Activated CD4-positive, alpha-beta T cell treated with anti-CD3 and anti-CD28 coated beads for 36 hours (primary cell): ENCODE measurements at regions of chr2 and their contacts with region 1.

Region 1: GRCh38 chr2:28681158-28681571 is 70.5 kb upstream of the PPP1CB start:
- DNase-seq: peak; percentile 81
- ATAC-seq: peak; percentile 91
- H3K4me3 Mint-ChIP-seq: peak overlapping the region; percentile 20
- H3K27ac Mint-ChIP-seq: peak overlapping the region; percentile 91
- H3K4me1 Mint-ChIP-seq: peaks cover 41% of the 10 kb centered on the region
- H3K27me3 Mint-ChIP-seq: no peaks in the 10 kb centered on the region

Region 2: GRCh38 chr2:28377984-28378678 is 303.0 kb before region 1 on chr2:
- CTCF ChIA-PET with region 1: no interaction called
- POLR2A ChIA-PET with region 1: no interaction called
- intact Hi-C with region 1: no loop called
- DNase-seq: peak; percentile 35
- ATAC-seq: peak; percentile 27
- H3K4me3 Mint-ChIP-seq: no peak overlapping the region
- H3K27ac Mint-ChIP-seq: no peak overlapping the region
- H3K4me1 Mint-ChIP-seq: peaks cover 20% of the 10 kb centered on the region
- H3K27me3 Mint-ChIP-seq: no peaks in the 10 kb centered on the region

Region 3: GRCh38 chr2:28649481-28650214 is 31.5 kb before region 1 on chr2:
- CTCF ChIA-PET with region 1: interaction called, 3 read pairs
- POLR2A ChIA-PET with region 1: interaction called, 3 read pairs
- intact Hi-C with region 1: loop called in 1 of 2 experiments (anchors 2 kb)
- DNase-seq: peak; percentile 79
- ATAC-seq: peak; percentile 97
- H3K4me3 Mint-ChIP-seq: peak overlapping the region; percentile 8
- H3K27ac Mint-ChIP-seq: peak overlapping the region; percentile 83
- H3K4me1 Mint-ChIP-seq: peaks cover 28% of the 10 kb centered on the region
- H3K27me3 Mint-ChIP-seq: no peaks in the 10 kb centered on the region